ENCODE measurements at regions of chr19 and their contacts with region 1.

Region 1: GRCh38 chr19:17766543-17767131 is 15.4 kb downstream of the FCHO1 start:
- DNase-seq: peak; percentile 76 to 82 (median 81)
- H3K4me3 ChIP-seq: peak overlapping the region in 1 of 3 experiments; percentile 21
- H3K4me3 Mint-ChIP-seq: peak overlapping the region in 1 of 2 donors; percentile 69
- H3K27ac ChIP-seq: peak overlapping the region in 1 of 2 donors; percentile 59
- H3K27ac Mint-ChIP-seq: peak overlapping the region; percentile 62 to 97 (median 90)
- H3K4me1 ChIP-seq: peaks cover 23 to 35% of the 10 kb centered on the region in 2 donors
- H3K4me1 Mint-ChIP-seq: peaks cover 28% of the 10 kb centered on the region
- H3K27me3 ChIP-seq: no peaks in the 10 kb centered on the region
- H3K27me3 Mint-ChIP-seq: no peaks in the 10 kb centered on the region
- CTCF ChIP-seq: peak; percentile 93

Region 2: DNA sequence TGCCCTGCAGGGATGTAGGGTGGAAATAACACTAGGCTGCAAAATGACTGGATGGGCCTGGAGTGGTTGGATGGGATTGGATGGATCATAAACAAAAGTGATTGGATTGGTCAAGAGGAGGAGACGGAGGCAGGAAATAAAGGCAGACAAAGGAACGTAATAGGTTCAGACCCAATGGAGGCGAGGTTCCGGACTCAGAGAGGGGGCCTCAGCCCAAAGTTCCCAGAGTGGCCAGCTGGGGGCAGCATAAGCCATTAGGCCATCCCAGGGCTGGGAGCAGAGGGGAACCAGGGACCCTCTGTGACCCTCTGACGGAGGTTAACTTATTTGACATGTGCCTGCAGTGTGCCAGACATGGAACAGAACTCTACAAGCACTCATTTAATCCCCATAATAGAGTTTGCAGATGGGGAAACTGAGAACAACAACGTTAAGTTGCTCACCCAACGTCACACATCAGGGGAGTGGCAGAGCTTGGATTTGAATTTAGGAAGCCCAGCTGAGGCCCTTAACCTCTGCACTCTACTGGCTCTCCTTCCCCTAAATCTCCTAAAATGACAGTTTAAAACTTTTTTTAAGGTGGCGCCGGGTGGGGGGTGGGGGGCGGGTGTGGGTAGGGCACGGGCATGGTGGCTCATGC is 62.7 kb before region 1 on chr19:
- intact Hi-C with region 1: loop called in 1 of 2 experiments (anchors 2 kb)
- DNase-seq: peak; percentile 50 to 72 (median 68)
- H3K4me3 ChIP-seq: no peak overlapping the region
- H3K4me3 Mint-ChIP-seq: no peak overlapping the region
- H3K27ac ChIP-seq: no peak overlapping the region
- H3K27ac Mint-ChIP-seq: no peak overlapping the region
- H3K4me1 ChIP-seq: no peaks in the 10 kb centered on the region
- H3K4me1 Mint-ChIP-seq: peaks cover 8% of the 10 kb centered on the region
- H3K27me3 ChIP-seq: no peaks in the 10 kb centered on the region
- H3K27me3 Mint-ChIP-seq: peaks cover 8 to 16% (median 11%) of the 10 kb centered on the region in 3 donors
- CTCF ChIP-seq: peak; percentile 95

Region 3: DNA sequence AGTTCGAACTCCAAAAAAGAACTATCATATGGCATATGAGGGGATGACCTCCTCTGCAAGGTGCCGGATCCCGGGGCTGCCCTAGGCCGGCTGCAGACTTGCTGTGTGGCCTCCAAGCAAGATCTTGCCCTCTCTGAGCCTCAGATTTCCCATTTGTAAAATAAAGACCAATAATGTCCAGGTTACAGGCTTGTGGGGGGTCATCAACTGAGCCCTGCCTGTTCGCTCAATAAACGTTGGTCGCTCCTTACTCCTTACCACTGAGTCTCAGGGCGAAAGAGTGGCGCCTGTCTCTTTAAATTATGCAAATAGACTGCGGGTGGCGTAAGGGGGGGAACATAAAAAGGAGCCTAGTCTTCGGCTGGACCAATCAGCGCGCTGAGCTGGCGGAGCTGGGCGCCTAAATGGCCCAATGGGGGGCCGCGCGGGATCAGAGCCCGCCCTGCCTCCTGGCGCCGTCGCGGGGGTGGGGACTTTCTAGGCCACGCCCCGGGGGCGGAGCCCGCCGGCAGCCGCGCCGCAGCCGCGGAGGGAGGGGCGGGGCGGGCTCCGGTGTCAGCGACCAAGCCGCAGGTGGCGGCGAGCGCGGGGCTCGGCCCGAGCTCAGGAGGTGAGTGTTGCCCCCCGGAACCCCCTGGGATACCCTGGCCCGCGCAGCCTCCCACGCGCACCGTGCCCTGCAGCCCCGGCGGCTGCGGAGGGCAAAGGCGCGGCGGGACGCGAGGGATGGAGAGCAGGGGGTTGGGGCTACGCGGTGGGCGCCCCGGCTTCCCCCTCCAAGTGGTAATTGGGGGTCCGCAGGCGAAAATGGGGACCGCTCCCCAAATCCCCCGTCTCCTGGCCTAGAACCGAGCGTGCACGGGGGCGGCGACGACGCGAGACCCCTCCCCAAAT is 19.2 kb before region 1 on chr19:
- intact Hi-C with region 1: loop called in 1 of 2 experiments (anchors 2 kb)
- DNase-seq: peak; percentile 94 to 97 (median 96)
- H3K4me3 ChIP-seq: peak overlapping the region; percentile 48 to 85 (median 66)
- H3K4me3 Mint-ChIP-seq: peak overlapping the region; percentile 42 to 69
- H3K27ac ChIP-seq: peak overlapping the region in 1 of 2 donors; percentile 65
- H3K27ac Mint-ChIP-seq: peak overlapping the region in 6 of 7 donors; percentile 47 to 90 (median 80)
- H3K4me1 ChIP-seq: peaks cover 55 to 65% of the 10 kb centered on the region in 2 donors
- H3K4me1 Mint-ChIP-seq: peaks cover 55% of the 10 kb centered on the region
- H3K27me3 ChIP-seq: no peaks in the 10 kb centered on the region
- H3K27me3 Mint-ChIP-seq: peaks cover 0 to 3% (median 0%) of the 10 kb centered on the region in 3 donors
- CTCF ChIP-seq: no peak